HCT116 (cell line): ENCODE measurements at regions of chr16 and their contacts with region 1.

Region 1: GRCh38 chr16:88442727-88443576 is 10.1 kb upstream of the ZFPM1 start:
- DNase-seq: peak; percentile 64
- ATAC-seq: peak; percentile 95
- H3K4me3 ChIP-seq: no peak overlapping the region
- H3K27ac ChIP-seq: peak overlapping the region; percentile 9; the same call in 1 of the 2 replicates
- H3K4me1 ChIP-seq: peaks cover 3 to 14% of the 10 kb centered on the region in 2 experiments; a peak in 3 of 4 replicates
- H3K27me3 ChIP-seq: no peaks in the 10 kb centered on the region
- CTCF ChIP-seq: peak in 2 of 3 experiments; percentile 98 to 100; a peak in 4 of 6 replicates
- POLR2A ChIP-seq: no peak
- RAD21 ChIP-seq: no peak

Region 2: GRCh38 chr16:88505405-88506082 is 62.6 kb after region 1 on chr16:
- CTCF ChIA-PET with region 1: no interaction called
- POLR2A ChIA-PET with region 1: no interaction called
- RAD21 ChIA-PET with region 1: no interaction called
- intact Hi-C with region 1: loop called (anchors 1 kb)
- DNase-seq: peak; percentile 60
- ATAC-seq: peak; percentile 84
- H3K4me3 ChIP-seq: no peak overlapping the region
- H3K27ac ChIP-seq: peak overlapping the region; percentile 21; the same call in 1 of the 2 replicates
- H3K4me1 ChIP-seq: peaks cover 6 to 17% of the 10 kb centered on the region in 2 experiments; a peak in 3 of 4 replicates
- H3K27me3 ChIP-seq: no peaks in the 10 kb centered on the region
- CTCF ChIP-seq: peak; percentile 69 to 88 (median 87); a peak in 5 of 6 replicates
- POLR2A ChIP-seq: no peak
- RAD21 ChIP-seq: no peak; the same call in 1 of the 2 replicates

Region 3: DNA sequence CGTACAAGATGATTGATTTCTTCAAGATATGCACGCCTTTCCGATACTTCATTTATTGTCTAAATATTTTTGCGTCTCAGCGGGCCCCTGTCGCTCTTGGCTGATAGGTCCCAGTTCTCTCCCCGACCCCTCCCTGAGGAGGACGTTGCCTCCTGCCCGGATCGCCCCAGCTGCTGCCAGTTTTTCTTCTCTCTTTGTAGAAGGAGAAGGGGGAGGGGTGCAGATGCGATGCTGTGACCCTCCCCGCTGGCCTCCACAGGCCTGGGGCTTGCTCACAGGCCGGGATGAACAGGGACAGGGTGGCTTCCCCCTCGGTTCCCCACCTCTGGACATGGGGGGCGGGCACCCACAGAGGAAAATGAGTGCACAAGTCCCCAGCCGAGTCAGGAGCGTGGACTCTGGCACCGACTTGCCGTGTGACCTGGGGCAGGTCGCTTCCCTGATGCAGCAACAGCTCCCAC is 73.7 kb after region 1 on chr16:
- CTCF ChIA-PET with region 1: no interaction called
- POLR2A ChIA-PET with region 1: no interaction called
- RAD21 ChIA-PET with region 1: no interaction called
- intact Hi-C with region 1: no loop called
- DNase-seq: no peak
- ATAC-seq: no peak
- H3K4me3 ChIP-seq: no peak overlapping the region
- H3K27ac ChIP-seq: no peak overlapping the region
- H3K4me1 ChIP-seq: no peaks in the 10 kb centered on the region
- H3K27me3 ChIP-seq: no peaks in the 10 kb centered on the region
- CTCF ChIP-seq: no peak
- POLR2A ChIP-seq: no peak
- RAD21 ChIP-seq: no peak

Region 4: GRCh38 chr16:88527186-88527936 is 84.4 kb after region 1 on chr16:
- CTCF ChIA-PET with region 1: no interaction called
- POLR2A ChIA-PET with region 1: no interaction called
- RAD21 ChIA-PET with region 1: interaction called in 1 of 2 experiments, 4 read pairs
- intact Hi-C with region 1: loop called (anchors 1 kb)
- DNase-seq: peak; percentile 34
- ATAC-seq: peak; percentile 87
- H3K4me3 ChIP-seq: no peak overlapping the region
- H3K27ac ChIP-seq: peak overlapping the region; percentile 34; the same call in 1 of the 2 replicates
- H3K4me1 ChIP-seq: peaks cover 0 to 10% of the 10 kb centered on the region in 2 experiments; a peak in 3 of 4 replicates
- H3K27me3 ChIP-seq: no peaks in the 10 kb centered on the region
- CTCF ChIP-seq: peak in 2 of 3 experiments; percentile 92 to 97; a peak in 4 of 6 replicates
- POLR2A ChIP-seq: no peak
- RAD21 ChIP-seq: no peak

Region 5: DNA sequence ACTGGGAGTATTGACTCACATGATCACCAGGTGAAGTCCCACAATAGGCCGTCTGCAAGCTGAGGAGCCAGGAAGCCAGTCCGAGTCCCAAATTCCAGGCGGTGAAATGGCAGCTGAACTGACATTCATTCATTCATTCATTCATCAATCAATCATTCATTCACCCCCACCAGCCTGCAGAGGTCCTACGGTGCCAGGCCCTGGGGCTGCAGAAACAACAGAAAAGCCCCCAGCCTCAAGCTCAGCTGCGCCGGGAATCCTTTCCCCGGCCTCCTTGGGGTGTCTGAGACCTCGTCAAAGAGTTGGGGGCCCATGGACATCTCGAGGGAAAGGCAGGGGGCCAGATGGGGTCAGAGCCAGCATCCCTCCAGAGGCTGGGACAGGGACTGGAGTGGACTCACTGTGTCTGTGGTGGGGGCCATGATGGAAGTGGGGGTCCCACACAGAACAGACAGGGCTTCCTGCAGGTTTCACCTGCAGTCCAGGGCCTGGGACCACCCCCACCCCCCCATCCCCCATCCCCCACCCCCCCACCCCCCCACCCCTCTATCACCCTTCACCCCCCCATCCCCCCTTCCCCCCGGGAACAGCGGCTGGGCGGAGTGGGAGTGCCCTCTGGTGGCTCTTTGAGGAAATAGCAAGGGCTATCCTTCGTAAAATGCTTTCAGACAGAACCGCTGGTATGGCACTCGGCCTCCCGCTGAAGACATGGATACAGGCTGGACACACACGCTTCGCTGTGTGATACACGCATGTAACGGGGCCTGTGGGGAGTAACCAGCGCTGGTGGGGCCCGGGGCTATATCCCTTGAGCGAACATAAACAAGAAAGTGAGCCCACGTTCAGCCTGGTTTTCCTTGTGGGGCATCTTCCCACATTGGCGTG is 118.8 kb after region 1 on chr16:
- CTCF ChIA-PET with region 1: interaction called, 13 read pairs
- POLR2A ChIA-PET with region 1: no interaction called
- RAD21 ChIA-PET with region 1: no interaction called
- intact Hi-C with region 1: loop called (anchors 1 kb)
- DNase-seq: peak; percentile 36
- ATAC-seq: peak; percentile 76
- H3K4me3 ChIP-seq: peak overlapping the region; percentile 28 to 45
- H3K27ac ChIP-seq: no peak overlapping the region; the same call in 1 of the 2 replicates
- H3K4me1 ChIP-seq: peaks cover 10 to 34% of the 10 kb centered on the region in 2 experiments; a peak in 3 of 4 replicates
- H3K27me3 ChIP-seq: no peaks in the 10 kb centered on the region
- CTCF ChIP-seq: peak; percentile 73 to 85 (median 79)
- POLR2A ChIP-seq: no peak
- RAD21 ChIP-seq: peak; percentile 85